ENCODE measurements at regions of chr11 and their contacts with region 1.

Region 1: DNA sequence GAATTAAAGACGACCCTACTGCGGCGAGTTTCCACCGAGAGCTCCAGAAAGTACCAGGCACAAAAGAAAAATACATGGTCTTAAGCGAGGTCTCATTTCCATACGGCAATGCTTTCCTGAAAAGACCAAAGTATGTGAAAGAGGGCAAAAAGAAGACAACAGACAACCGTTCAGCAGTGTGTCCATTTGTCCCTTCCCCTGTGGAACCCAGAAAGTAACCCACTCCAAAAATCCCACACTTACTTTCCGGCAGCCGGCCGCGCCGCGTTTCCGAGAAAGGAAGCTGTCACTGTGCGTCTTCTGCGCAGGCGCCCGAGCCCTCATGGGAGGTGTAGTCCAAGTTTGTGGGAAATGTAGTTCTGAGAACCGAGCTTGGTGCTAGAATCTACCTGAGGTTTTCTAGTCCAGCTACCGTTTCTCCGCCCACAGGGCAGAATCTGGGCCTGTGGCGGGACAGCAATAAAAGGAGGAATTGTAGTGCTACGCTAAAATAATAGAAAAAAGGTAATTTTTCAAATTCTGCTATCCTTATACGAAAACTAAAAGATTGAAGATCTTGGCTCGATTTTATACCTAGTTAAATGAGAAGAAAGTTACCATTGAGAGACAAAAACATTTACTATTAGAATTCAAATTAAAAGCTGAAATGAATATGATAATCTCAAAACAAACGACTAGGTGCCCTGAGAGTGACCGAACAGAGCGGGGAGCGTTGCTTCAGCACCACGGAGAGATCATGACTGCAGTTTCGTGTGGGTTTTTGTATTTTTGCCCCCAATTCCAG is at the start of gene PUS3:
- DNase-seq: peak; percentile 78

Region 2: DNA sequence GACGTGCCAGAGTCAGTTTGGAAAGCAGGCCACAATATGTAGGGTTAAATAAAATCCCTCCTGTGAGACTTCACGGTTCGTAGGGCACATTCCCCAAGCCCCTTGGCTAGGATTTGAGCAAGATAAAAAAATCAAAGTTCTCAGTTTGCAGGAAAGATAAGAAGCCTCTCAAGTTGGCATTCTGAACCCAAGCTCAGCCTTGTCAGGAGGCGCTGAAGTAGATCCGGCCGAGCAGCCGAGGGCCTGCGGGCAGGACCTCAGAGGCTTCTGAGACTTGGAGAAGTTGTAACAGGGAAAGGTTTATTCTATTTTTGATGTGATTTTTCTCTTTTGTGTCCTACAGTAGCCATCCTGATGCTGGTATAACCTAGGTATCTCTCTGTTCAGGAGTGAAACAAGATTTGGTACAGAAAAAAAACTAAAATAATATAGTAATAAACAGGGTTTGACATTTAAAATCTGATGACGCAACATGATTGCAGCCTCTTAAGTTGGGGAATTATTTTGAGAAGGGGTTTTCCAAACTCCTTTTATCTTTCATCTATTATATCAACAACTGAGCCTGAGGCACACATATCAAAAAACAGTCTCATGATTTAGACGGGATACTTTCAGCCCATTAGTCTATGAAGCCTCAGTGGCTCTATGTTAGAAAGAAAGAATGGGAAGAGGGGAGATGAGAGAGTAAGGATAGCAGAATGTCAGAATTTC is 134.6 kb before region 1 on chr11:
- in situ Hi-C with region 1: no loop called
- DNase-seq: no peak

Region 3: GRCh38 chr11:126211235-126212088 is 308.3 kb after region 1 on chr11 and contains the starts of genes FAM118B and RPUSD4:
- in situ Hi-C with region 1: loop called (anchors 25 kb)
- DNase-seq: peak; percentile 94